ENCODE measurements at regions of chr6 and their contacts with region 1.

Region 1: GRCh38 chr6:89432875-89433251 is at the start of gene ANKRD6:
- H3K4me3 ChIP-seq: peak within 1 kb of the TSS; percentile 83
- H3K27ac ChIP-seq: peak within 1 kb of the TSS; percentile 86
- H3K4me1 ChIP-seq: peaks cover 24% of the 10 kb centered on the region
- CTCF ChIP-seq: peak; percentile 42

Region 2: GRCh38 chr6:89320012-89320559 is 112.8 kb before region 1 on chr6:
- CTCF ChIA-PET with region 1: no interaction called
- POLR2A ChIA-PET with region 1: no interaction called
- H3K4me3 ChIP-seq: no peak overlapping the region
- H3K27ac ChIP-seq: no peak overlapping the region
- H3K4me1 ChIP-seq: no peaks in the 10 kb centered on the region
- CTCF ChIP-seq: no peak

Region 3: DNA sequence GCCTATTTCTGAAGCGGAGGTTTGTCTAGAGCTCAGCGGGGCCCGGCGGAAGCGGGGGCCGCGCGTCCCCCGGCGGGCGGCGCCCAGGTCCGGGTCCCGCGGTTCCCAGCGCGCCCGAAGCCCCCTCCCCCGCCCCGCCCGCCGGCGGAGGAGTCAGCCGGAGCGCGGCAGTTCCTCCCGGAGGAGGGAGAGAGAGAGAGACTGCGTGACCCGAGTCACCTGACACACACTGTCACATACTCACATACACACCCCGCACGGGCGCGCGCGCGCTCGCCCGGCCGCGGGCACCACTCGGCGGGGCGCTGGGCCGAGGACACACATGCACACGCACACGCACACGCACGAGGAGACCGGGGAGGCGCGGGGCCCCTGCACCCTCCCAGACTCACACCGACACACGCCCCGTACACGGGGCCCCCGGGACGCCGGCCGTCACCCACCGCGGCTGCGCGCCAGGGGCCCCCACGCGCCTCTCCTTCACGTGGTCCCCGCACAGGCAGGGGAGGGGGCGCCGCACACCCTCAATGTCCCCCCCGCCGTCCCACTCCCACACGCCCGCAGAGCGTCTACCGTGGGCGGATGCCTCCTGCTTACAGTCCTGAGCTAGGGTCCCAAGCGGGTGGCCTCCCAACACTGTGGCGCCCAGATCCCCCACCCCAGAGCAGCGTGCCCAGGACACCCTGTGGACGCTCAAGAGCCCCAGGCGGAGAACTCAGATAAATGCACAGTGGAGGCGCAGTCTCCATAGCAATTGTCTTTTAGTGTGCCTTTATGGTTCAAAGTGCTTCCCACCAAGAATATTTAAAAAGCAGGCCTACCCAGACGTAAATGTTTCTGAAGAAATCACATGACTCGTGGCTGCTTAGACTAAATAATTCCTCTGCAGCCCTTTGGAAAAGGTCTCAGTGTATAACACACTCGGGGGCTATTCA is 20.5 kb before region 1 on chr6 and contains the start of gene RRAGD:
- CTCF ChIA-PET with region 1: interaction called, 14 read pairs
- POLR2A ChIA-PET with region 1: interaction called, 6 read pairs
- H3K4me3 ChIP-seq: peak within 1 kb of the TSS; percentile 85
- H3K27ac ChIP-seq: peak within 1 kb of the TSS; percentile 83
- H3K4me1 ChIP-seq: peaks cover 14% of the 10 kb centered on the region
- CTCF ChIP-seq: peak; percentile 88

Region 4: DNA sequence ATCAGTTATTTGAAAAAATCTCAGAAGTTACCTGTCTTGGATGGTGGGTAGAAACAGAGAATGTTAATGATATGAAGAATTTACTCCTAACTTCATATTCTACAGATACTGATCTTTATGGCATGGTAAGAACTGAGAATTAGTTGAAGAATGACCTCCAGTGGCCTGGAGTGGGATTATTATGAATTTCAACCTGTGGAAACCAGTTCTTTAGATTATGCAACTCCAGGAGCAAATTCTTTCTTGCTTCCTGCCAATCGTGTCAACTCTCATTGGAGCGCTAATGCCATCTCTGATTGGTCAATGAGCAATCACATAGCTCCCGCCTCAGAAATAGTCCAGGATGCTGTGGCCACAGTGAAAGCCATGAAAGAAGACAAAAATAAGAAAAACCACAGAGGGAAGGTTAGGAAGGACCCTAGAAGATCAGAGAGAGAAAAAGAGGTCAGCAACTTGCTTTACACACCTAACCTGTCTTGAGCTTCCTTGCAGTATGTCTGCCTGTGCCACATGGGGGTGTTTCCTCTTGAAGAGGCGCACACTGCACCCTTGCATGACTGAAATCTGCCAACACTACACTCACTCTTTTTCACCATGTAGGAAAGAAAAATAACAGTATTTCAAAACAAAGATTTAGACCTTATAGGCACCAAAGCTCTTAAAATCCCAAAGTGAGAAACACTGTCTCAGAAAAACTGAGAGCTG is 165.3 kb after region 1 on chr6:
- CTCF ChIA-PET with region 1: interaction called, 22 read pairs
- POLR2A ChIA-PET with region 1: no interaction called
- H3K4me3 ChIP-seq: no peak overlapping the region
- H3K27ac ChIP-seq: no peak overlapping the region
- H3K4me1 ChIP-seq: no peaks in the 10 kb centered on the region
- CTCF ChIP-seq: no peak

Region 5: DNA sequence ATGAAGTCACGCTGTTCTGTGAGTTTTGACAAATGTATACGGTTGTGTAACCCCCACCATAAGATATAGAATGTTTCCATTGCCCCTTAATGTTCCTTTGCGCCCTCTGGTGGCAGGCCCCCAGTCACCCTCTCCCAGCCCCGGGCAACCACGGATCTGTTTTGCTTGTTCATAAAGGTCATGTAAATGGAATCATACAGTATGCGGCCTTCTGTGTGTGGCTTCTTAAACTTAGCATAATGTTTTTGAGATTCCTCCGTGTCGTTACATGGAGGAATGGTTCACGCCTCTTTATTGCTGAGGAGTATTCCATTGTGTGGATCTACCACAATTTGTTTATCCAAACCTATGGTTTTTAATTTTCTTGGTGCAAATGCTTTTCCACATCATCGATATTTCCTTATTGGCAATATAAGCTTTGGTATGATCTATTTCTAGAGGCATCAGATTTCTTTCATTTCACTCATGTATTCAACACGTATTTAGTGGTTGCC is 177.3 kb after region 1 on chr6:
- CTCF ChIA-PET with region 1: interaction called, 47 read pairs
- POLR2A ChIA-PET with region 1: interaction called, 3 read pairs
- H3K4me3 ChIP-seq: no peak overlapping the region
- H3K27ac ChIP-seq: no peak overlapping the region
- H3K4me1 ChIP-seq: no peaks in the 10 kb centered on the region
- CTCF ChIP-seq: peak; percentile 47

Region 6: GRCh38 chr6:89895276-89895874 is 462.5 kb after region 1 on chr6:
- CTCF ChIA-PET with region 1: no interaction called
- POLR2A ChIA-PET with region 1: no interaction called
- H3K4me3 ChIP-seq: no peak overlapping the region
- H3K27ac ChIP-seq: no peak overlapping the region
- H3K4me1 ChIP-seq: no peaks in the 10 kb centered on the region
- CTCF ChIP-seq: no peak

Measured in HEK293 (cell line).